Endothelial cell of umbilical vein (primary cell): ENCODE measurements at regions of chr11 and their contacts with region 1.

Region 1: DNA sequence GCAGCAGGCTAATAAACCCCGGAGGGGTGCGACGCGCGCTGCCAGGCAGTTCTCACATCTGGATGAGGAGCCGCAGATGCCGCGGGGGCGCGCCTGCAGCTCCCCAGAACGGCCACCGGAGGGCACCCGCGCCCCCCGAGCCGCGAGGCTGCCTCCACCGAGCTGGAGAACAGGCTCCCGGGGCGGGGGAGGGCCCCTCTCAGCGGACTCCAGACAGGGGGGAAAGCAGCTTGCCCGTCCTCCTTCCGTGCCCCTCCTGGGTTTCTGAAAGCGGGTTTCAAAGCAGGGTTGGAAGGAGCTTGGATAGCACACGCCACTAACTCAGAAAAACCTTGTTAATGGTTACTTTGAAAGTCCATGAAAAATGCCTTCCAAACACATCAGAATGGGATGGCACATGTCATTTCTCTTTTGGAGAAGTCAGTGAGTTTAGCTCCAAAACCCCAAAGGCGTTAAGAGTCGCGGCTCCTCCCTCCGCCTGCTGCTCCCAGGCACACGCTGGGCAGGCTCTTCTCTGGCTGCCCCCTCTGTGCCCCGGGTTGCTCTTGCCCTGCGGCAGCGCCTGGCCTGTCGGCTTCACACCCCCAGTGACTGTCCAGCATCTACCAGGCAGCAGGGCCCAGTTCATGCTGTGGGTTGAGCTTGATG is 317.8 kb downstream of the NTM start:
- DNase-seq: peak; percentile 54
- H3K4me3 ChIP-seq: no peak overlapping the region
- H3K27ac ChIP-seq: no peak overlapping the region
- H3K4me1 ChIP-seq: no peaks in the 10 kb centered on the region
- H3K27me3 ChIP-seq: peaks cover 0 to 2% of the 10 kb centered on the region in 2 experiments
- CTCF ChIP-seq: peak; percentile 90 to 95
- POLR2A ChIP-seq: no peak

Region 2: DNA sequence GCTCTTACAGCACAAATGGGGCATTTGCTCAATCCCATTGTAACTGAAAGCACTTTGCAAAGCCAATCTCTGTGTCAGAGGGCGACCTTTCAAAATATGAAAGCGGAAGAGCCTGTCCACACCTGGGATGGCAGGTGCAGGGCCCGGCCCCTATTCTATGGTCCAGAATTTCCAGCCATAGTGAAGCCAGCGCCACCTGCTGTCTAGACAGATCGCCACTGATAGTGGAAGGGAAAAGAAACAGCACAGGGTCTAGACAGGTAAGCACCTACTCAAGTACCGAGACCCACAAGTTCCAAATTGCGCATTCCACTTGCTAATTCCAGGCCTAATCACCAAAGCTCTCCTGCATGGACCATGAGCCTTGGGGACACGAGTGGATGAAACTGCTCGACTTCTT is 176.4 kb before region 1 on chr11:
- CTCF ChIA-PET with region 1: no interaction called
- POLR2A ChIA-PET with region 1: no interaction called
- dilution Hi-C with region 1: no loop called
- intact Hi-C with region 1: no loop called
- DNase-seq: no peak
- H3K4me3 ChIP-seq: no peak overlapping the region
- H3K27ac ChIP-seq: no peak overlapping the region
- H3K4me1 ChIP-seq: no peaks in the 10 kb centered on the region
- H3K27me3 ChIP-seq: no peaks in the 10 kb centered on the region
- CTCF ChIP-seq: no peak
- POLR2A ChIP-seq: no peak

Region 3: DNA sequence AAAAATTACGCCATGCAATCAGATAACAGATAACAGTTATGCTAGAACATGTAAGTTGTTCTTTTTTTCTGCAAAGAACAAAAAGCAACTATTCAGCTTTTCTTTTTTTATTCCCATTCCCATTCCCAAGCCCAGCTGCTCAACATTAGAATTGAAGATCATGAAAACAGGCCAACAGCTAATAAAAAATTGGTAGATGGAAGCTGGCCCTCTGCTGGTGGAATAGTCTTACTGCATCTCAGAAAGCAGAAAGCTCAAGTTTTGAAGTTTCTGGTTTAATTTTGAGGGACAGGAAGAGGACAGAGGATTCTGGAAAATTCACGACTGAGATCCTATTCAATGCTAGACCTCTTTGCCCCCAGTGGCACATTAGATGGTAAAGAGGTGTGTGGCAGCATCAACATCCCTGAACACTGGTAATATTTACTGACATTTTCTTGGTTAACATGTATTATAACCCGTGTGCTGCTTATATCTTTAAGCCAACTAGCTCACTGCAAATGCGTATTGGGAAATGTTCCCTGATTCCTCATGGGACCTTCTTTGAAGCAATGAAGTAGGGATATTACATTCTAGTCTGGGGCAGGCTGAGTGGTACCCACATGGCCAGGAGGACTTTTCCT is 1253.0 kb after region 1 on chr11:
- CTCF ChIA-PET with region 1: interaction called, 74 read pairs
- POLR2A ChIA-PET with region 1: no interaction called
- dilution Hi-C with region 1: no loop called
- intact Hi-C with region 1: loop called (anchors 1 kb)
- DNase-seq: peak; percentile 19
- H3K4me3 ChIP-seq: no peak overlapping the region
- H3K27ac ChIP-seq: no peak overlapping the region
- H3K4me1 ChIP-seq: no peaks in the 10 kb centered on the region
- H3K27me3 ChIP-seq: peaks cover 10 to 17% of the 10 kb centered on the region in 2 experiments
- CTCF ChIP-seq: peak; percentile 67 to 71
- POLR2A ChIP-seq: no peak